Activated CD8-positive, alpha-beta T cell treated with anti-CD3 and anti-CD28 coated beads for 36 hours (primary cell): ENCODE measurements at regions of chr1 and their contacts with region 1.

Region 1: GRCh38 chr1:63537940-63538339 is 14.6 kb downstream of the EFCAB7 start:
- DNase-seq: no peak
- ATAC-seq: no peak
- H3K4me3 Mint-ChIP-seq: no peak overlapping the region
- H3K27ac Mint-ChIP-seq: no peak overlapping the region
- H3K4me1 Mint-ChIP-seq: no peaks in the 10 kb centered on the region
- H3K27me3 Mint-ChIP-seq: no peaks in the 10 kb centered on the region
- CTCF ChIP-seq: peak; percentile 42

Region 2: DNA sequence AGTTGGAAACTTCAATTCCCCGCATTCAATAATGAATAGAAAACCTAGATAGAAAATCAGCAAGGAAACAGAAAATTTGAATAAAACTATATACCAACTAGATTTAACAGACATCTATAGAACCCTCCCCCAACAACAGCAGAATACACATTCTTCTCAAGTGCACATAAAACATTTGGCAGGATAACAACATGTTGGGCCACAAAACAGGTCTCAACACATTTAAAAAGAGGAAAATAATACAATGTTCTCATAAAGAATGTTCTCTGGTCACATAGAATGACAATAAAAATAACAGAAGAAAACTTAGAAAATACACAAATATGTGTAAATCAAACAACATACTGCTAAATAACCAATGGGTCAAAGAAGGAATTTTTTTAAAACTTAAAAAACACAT is 39.8 kb before region 1 on chr1:
- CTCF ChIA-PET with region 1: no interaction called
- POLR2A ChIA-PET with region 1: no interaction called
- intact Hi-C with region 1: no loop called
- DNase-seq: no peak
- ATAC-seq: no peak
- H3K4me3 Mint-ChIP-seq: no peak overlapping the region
- H3K27ac Mint-ChIP-seq: no peak overlapping the region
- H3K4me1 Mint-ChIP-seq: peaks cover 4% of the 10 kb centered on the region
- H3K27me3 Mint-ChIP-seq: no peaks in the 10 kb centered on the region
- CTCF ChIP-seq: no peak

Region 3: DNA sequence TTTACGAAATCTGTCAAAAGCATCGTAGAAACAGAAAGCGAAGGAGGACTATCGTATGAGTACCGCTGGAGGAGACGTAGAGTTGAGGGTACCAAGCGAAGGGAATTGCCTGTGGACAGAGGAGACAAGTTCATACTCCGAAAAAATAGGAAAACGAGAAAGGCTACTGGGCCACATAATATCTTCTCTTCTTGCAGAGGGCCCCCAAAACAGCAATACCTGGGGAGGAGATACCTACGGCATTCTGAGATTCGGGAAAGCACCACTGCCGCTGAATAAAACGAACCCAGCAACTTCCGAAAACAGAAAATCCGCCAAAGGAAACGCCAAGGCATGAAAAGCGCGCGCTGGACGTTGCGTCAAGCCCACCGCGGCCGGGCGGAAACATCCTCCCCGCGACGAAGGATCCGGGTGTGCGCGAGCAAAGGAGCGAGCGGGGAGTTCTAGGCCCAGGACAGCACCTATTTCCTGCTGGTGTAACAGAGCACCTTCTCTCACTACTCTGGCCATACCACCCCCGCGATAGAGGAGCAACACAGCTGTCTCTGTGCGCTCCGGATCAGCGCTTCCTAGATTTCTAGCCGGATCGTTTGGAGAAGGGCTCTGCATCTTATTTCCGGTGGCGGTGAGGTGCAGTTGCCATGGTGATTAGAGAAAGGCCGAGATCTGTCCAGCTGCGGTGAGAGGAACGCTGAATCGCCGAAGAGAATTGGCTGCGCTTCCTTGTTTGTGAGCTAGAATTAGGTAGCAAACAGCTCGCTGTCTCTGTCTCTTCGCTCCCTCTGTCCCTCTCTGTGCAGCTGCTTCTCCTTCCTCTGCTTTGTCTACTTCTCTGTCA is 14.8 kb before region 1 on chr1 and contains the starts of genes EFCAB7 and ITGB3BP:
- CTCF ChIA-PET with region 1: interaction called, 13 read pairs
- POLR2A ChIA-PET with region 1: no interaction called
- intact Hi-C with region 1: no loop called
- DNase-seq: peak; percentile 85
- ATAC-seq: peak; percentile 92
- H3K4me3 Mint-ChIP-seq: peak within 1 kb of the TSS; percentile 84
- H3K27ac Mint-ChIP-seq: peak within 1 kb of the TSS; percentile 98
- H3K4me1 Mint-ChIP-seq: peaks cover 23% of the 10 kb centered on the region
- H3K27me3 Mint-ChIP-seq: no peaks in the 10 kb centered on the region
- CTCF ChIP-seq: no peak
- total RNA-seq, gene EFCAB7: 6.1 to 6.8 TPM
- total RNA-seq, gene ITGB3BP: 76.6 to 86.6 TPM